ENCODE measurements at regions of chr20 and their contacts with region 1.

Region 1: DNA sequence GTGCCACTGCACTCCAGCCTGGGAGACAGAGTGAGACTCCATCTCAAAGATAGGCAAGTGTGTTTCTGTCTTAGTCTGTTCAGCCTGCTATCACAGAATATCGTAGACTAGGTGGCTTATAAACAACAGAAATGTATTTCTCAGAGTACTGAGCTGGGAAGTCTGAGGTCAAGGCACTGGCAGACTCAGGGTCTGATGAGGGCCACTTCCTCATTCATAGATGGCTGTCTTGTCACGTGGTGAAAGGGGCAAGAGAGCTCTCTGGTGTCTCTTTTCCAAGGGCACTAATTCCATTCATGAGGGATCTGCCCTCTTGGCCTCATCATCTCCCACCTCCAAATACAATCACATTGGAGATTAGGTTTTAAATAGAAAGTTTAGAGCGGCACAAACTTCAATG is 95.6 kb upstream of the PHACTR3 start:
- DNase-seq: no peak
- ATAC-seq: no peak
- H3K4me3 ChIP-seq: no peak overlapping the region
- H3K27ac ChIP-seq: no peak overlapping the region
- H3K4me1 ChIP-seq: no peaks in the 10 kb centered on the region
- CTCF ChIP-seq: no peak
- EP300 ChIP-seq: no peak
- POLR2A ChIP-seq: no peak
- RAD21 ChIP-seq: no peak

Region 2: GRCh38 chr20:59518881-59519688 is 10.4 kb after region 1 on chr20:
- CTCF ChIA-PET with region 1: interaction called, 86 read pairs
- POLR2A ChIA-PET with region 1: no interaction called
- DNase-seq: peak; percentile 65 to 84
- ATAC-seq: peak; percentile 84 to 88
- H3K4me3 ChIP-seq: no peak overlapping the region
- H3K27ac ChIP-seq: no peak overlapping the region
- H3K4me1 ChIP-seq: no peaks in the 10 kb centered on the region
- CTCF ChIP-seq: peak; percentile 44
- EP300 ChIP-seq: no peak
- POLR2A ChIP-seq: no peak
- RAD21 ChIP-seq: no peak

Measured in A549 (cell line).